B cell (primary cell): ENCODE measurements at regions of chr19 and their contacts with region 1.

Region 1: DNA sequence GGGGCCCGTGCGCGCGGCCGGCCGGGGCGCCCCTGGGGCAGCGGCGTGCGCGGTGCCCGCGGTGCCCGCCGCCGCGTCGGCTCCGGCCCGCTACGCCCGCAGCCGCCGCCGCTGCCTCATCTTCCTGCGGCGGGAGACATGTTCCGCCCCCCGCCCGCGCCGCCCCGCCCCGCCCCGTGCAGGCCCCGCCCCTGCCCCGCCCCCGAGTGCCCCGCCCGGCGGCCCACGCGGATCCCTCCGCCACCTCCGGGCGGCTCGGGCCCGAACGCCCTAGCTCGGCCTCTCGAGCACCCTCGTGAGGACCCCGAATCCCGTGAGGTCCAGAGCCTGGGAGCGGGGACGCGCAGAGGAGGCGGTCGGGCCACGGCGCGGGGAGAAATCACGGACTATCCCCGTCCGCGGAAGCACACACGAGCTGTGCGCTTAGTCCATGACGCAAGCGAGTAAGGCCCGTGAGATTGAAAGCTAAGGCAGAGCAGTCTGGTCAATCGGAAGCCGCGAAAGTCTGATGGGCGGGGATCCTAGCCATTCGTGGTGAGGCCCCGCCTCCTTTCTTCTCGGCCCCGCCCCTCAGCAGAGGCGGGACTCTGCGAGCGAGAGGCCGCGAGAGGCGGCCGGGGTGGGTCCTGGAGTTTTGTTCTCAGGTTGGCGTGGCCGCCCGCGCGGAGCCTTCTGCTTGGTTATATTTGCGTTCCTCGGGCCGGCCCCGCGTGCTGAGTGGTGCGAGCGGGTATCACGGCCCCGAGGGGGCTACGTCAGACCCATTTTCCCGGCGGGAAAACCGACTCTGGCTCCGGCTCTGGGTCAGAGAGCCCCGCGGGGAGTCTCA is at the start of gene TCF3:
- DNase-seq: peak; percentile 100
- ATAC-seq: peak; percentile 82
- H3K4me3 ChIP-seq: peak within 1 kb of the TSS; percentile 62 to 90 (median 81)
- H3K4me3 Mint-ChIP-seq: peak within 1 kb of the TSS; percentile 96
- H3K27ac ChIP-seq: peak within 1 kb of the TSS; percentile 100
- H3K27ac Mint-ChIP-seq: peak within 1 kb of the TSS; percentile 99
- H3K4me1 ChIP-seq: peaks cover 39 to 73% of the 10 kb centered on the region in 2 donors
- H3K4me1 Mint-ChIP-seq: peaks cover 63% of the 10 kb centered on the region
- H3K27me3 ChIP-seq: no peaks in the 10 kb centered on the region
- H3K27me3 Mint-ChIP-seq: no peaks in the 10 kb centered on the region
- CTCF ChIP-seq: no peak
- total RNA-seq, gene TCF3: 263 and 278 TPM in 2 replicates

Region 2: DNA sequence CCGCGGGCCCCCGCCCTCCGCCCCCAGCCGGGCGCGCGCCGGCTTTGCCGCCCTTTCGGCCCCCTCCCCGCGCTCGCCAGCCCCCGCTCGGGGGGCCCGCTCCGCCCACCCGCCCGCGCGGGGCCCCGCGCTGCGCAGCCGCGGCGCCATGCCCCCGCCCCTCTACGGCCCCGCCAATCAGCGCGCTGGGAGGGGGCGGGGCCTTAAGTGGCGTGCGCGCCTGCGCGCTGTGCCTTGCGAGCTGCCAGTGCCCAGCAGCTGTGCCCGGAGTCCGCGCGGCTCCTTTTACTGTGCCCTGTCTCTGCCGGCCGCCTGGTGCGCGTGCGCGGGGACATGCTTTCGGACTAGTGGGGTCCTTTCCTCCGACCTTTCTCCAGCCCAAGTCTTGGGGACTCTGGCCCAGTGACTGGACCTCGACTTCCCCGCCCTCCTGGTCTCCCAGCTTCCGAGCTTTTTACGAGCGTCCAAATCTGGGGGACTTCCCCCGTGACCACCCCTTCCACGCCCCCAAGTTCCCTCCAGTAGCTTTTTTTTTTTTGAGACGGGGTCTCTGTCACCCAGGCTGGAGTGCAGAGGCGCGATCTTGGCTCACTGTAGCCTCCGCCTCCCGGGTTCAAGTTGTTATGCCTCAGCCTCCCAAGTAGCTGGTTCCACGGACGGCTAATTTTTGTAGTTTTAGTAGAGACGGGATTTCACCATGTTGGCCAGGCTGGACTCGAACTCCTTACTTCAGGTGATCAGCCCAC is 59.8 kb before region 1 on chr19 and contains the start of gene MBD3:
- CTCF ChIA-PET with region 1: no interaction called
- POLR2A ChIA-PET with region 1: interaction called, 5 read pairs
- intact Hi-C with region 1: loop called (anchors 1 kb)
- DNase-seq: peak; percentile 93
- ATAC-seq: peak; percentile 87
- H3K4me3 ChIP-seq: peak within 1 kb of the TSS; percentile 36 to 90 (median 80)
- H3K4me3 Mint-ChIP-seq: peak within 1 kb of the TSS; percentile 93
- H3K27ac ChIP-seq: peak within 1 kb of the TSS; percentile 84 to 89
- H3K27ac Mint-ChIP-seq: peak within 1 kb of the TSS; percentile 89
- H3K4me1 ChIP-seq: peaks cover 17 to 34% of the 10 kb centered on the region in 2 donors
- H3K4me1 Mint-ChIP-seq: peaks cover 29% of the 10 kb centered on the region
- H3K27me3 ChIP-seq: no peaks in the 10 kb centered on the region
- H3K27me3 Mint-ChIP-seq: no peaks in the 10 kb centered on the region
- CTCF ChIP-seq: no peak
- total RNA-seq, gene MBD3: 84.6 and 87.6 TPM in 2 replicates

Region 3: DNA sequence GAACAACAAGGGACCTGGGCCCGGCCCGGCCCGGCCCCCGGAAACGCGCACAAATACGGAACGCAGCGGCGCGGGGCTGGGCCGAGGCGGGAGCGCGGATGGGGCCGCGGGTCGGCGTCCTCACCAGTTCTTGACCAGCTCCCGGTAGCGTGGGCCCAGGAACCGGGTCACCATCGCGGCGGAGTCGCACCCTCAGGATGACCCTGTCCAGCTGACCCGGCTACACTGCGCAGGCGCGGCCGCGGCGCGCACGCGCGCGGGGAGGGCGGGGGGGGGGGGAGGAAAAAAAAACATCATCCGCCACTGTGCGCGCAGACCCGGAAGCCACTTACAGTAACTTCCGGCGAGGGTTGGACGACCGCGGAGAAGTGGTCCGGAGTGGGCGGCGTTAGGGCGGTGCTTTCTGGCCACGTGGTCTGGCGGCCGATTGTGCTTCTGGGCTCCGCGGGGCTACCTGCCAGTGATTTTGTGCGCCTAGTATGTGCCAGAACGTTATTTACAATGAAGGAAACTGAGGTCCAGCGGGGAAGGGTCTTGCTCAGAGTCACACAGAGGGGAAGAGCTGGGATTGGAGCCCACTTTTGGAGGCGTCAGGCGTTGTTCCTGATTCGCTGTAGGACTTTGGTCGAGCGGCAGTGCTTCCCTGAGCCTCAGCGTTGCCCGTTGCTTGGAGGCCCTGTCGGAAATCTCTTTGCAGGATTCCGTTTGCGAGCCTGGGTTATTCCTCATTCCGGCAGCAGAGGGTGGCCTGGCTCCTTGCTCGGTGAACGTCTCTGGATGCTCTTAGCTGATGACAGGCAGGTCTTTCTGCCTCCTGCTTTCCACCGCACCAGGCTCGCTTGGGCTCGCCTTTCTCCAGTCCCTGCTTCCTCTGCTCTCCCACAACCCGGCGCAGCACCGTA is 47.2 kb before region 1 on chr19 and contains the start of gene UQCR11:
- CTCF ChIA-PET with region 1: interaction called, 12 read pairs
- POLR2A ChIA-PET with region 1: interaction called, 7 read pairs
- intact Hi-C with region 1: loop called (anchors 1 kb)
- DNase-seq: peak; percentile 95
- ATAC-seq: peak; percentile 91
- H3K4me3 ChIP-seq: peak within 1 kb of the TSS; percentile 86 to 99 (median 98)
- H3K4me3 Mint-ChIP-seq: peak within 1 kb of the TSS; percentile 96
- H3K27ac ChIP-seq: peak within 1 kb of the TSS; percentile 61 to 86
- H3K27ac Mint-ChIP-seq: peak within 1 kb of the TSS; percentile 97
- H3K4me1 ChIP-seq: peaks cover 31 to 45% of the 10 kb centered on the region in 2 donors
- H3K4me1 Mint-ChIP-seq: peaks cover 45% of the 10 kb centered on the region
- H3K27me3 ChIP-seq: no peaks in the 10 kb centered on the region
- H3K27me3 Mint-ChIP-seq: no peaks in the 10 kb centered on the region
- CTCF ChIP-seq: peak; percentile 50
- total RNA-seq, gene UQCR11: 66.8 and 73.7 TPM in 2 replicates

Region 4: DNA sequence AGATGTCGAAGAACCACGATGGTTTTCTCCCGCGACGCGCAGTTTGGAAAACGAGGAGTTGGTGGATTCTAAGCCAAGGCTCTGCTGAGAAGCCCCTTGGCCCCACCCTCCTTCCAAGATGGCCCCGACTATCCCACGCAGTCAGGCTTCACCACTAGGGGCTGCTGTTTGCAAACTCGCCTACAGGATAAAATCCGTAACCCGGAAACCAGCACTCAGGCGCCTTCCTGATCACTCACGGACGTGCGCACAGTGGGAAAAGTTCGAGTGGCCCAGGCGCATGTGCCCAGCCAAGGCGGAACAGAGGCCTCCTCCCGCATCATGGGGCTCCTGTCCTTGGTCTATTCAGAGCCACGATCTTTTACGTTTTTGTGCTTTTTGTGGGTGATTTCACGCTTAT is 28.2 kb before region 1 on chr19:
- CTCF ChIA-PET with region 1: interaction called, 4 read pairs
- POLR2A ChIA-PET with region 1: interaction called, 7 read pairs
- intact Hi-C with region 1: loop called (anchors 2 kb)
- DNase-seq: peak; percentile 70
- ATAC-seq: peak; percentile 80
- H3K4me3 ChIP-seq: no peak overlapping the region
- H3K4me3 Mint-ChIP-seq: no peak overlapping the region
- H3K27ac ChIP-seq: no peak overlapping the region
- H3K27ac Mint-ChIP-seq: peak overlapping the region; percentile 74
- H3K4me1 ChIP-seq: peaks cover 0 to 15% of the 10 kb centered on the region in 2 donors
- H3K4me1 Mint-ChIP-seq: peaks cover 9% of the 10 kb centered on the region
- H3K27me3 ChIP-seq: no peaks in the 10 kb centered on the region
- H3K27me3 Mint-ChIP-seq: no peaks in the 10 kb centered on the region
- CTCF ChIP-seq: peak; percentile 77

Region 5: DNA sequence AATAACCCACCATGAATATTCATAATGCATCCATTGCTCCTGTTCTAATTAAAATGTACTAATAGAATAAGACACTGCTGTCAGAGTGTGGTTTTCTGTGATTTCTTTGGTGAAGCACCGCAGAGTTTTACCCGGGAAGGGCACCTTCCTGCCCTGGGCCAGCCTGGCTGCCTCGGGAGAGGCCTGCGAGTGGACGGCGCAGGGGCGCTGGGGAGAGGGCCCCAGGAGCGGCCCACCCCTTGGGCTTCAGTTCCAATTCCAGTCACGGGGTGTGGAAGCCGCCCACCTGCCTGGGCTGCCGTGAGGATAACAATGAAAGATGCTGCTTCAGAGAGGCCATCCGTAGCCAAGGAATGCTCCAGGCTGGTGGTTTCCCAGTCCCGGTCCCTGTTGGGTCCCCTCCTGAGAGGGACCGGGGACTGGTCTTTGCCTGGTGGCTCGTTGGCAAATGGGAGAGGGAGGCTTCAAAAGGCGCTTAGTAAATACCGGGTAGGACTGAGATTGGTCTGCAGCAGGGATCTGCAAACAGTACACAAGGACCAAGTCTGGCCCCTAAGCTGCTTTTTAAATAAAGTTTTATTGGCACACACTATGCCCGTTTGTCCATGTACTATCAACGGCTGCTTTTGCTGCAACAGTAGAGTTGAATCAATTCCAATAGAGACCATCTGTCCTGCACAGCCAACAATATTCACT is 18.3 kb before region 1 on chr19:
- CTCF ChIA-PET with region 1: interaction called, 8 read pairs
- POLR2A ChIA-PET with region 1: interaction called, 14 read pairs
- intact Hi-C with region 1: no loop called
- DNase-seq: no peak
- ATAC-seq: no peak
- H3K4me3 ChIP-seq: no peak overlapping the region
- H3K4me3 Mint-ChIP-seq: no peak overlapping the region
- H3K27ac ChIP-seq: no peak overlapping the region
- H3K27ac Mint-ChIP-seq: no peak overlapping the region
- H3K4me1 ChIP-seq: no peaks in the 10 kb centered on the region
- H3K4me1 Mint-ChIP-seq: peaks cover 7% of the 10 kb centered on the region
- H3K27me3 ChIP-seq: no peaks in the 10 kb centered on the region
- H3K27me3 Mint-ChIP-seq: no peaks in the 10 kb centered on the region
- CTCF ChIP-seq: no peak

Region 6: DNA sequence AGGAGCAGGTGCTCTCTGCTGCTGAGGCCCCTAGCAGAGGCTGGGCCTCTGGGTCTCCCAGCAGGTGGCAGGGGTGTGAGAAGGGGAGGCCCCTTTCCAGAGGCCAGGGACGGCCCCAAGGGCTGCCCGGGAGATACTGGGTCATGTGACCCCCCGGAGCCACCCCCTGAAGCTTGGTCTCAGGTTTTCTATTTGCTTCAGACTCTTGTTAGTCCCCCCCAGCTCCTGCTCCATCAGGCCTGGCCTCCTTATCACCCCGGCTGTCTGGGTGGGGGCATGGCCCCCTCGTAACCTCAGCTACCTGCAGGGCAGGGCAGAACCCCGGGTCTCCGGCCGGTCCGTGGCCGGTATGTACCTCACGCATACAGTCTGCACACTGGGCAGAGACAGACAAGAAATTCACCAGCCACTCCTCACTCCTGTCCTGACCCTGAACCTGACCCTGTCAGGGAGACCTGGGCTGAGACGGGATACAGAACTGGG is 12.9 kb after region 1 on chr19:
- CTCF ChIA-PET with region 1: interaction called, 114 read pairs
- POLR2A ChIA-PET with region 1: interaction called, 46 read pairs
- intact Hi-C with region 1: loop called (anchors 1 kb)
- DNase-seq: peak; percentile 45
- ATAC-seq: no peak
- H3K4me3 ChIP-seq: no peak overlapping the region
- H3K4me3 Mint-ChIP-seq: peak overlapping the region; percentile 64
- H3K27ac ChIP-seq: peak overlapping the region; percentile 19 to 52
- H3K27ac Mint-ChIP-seq: peak overlapping the region; percentile 91
- H3K4me1 ChIP-seq: peaks cover 56 to 86% of the 10 kb centered on the region in 2 donors
- H3K4me1 Mint-ChIP-seq: peaks cover 54% of the 10 kb centered on the region
- H3K27me3 ChIP-seq: no peaks in the 10 kb centered on the region
- H3K27me3 Mint-ChIP-seq: no peaks in the 10 kb centered on the region
- CTCF ChIP-seq: no peak

Region 7: DNA sequence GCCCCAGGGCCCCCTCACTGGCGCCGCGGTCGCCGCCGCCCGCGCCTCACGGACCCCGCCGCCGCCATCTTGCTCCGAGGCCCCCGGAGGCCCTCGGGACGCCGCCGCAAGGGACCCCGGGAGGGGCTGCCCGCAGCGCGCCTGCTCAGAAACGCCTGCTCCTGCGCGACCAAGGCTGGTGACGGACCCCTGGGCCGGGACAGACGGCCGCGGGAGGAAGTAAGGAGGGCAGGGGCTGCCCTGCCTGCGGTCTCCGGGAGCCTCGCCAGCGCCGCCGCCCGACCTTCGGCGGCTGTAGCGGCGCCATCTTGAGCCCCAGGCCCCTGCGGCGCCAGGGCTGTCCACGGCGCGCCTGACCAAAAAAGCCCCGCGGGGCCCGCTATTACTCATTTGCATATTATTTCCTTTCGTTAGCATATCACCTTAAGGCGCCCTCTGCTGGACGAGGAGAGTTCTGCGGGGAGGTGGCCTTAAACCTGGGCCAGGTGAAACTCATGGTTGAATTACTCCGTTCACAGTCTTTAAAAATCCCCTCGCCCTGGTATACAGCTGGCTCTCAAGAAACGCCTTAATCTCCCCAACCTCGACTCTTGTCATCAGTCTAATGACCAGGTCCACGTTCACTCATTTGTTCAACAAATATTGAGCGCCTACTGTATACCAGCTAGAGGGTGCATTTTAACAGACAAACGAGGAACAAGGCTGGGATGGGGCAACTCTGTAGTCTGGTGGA is 195.9 kb after region 1 on chr19 and contains the start of gene REXO1:
- CTCF ChIA-PET with region 1: no interaction called
- POLR2A ChIA-PET with region 1: no interaction called
- intact Hi-C with region 1: loop called (anchors 5 kb)
- DNase-seq: peak; percentile 100
- ATAC-seq: peak; percentile 73
- H3K4me3 ChIP-seq: peak within 1 kb of the TSS; percentile 47 to 95 (median 83)
- H3K4me3 Mint-ChIP-seq: peak within 1 kb of the TSS; percentile 90
- H3K27ac ChIP-seq: peak within 1 kb of the TSS; percentile 95 to 97
- H3K27ac Mint-ChIP-seq: peak within 1 kb of the TSS; percentile 93
- H3K4me1 ChIP-seq: peaks cover 59 to 80% of the 10 kb centered on the region in 2 donors
- H3K4me1 Mint-ChIP-seq: peaks cover 63% of the 10 kb centered on the region
- H3K27me3 ChIP-seq: no peaks in the 10 kb centered on the region
- H3K27me3 Mint-ChIP-seq: no peaks in the 10 kb centered on the region
- CTCF ChIP-seq: peak; percentile 87
- total RNA-seq, gene REXO1: 72.4 and 72.6 TPM in 2 replicates